ENCODE measurements at regions of chr22 and their contacts with region 1.

Region 1: DNA sequence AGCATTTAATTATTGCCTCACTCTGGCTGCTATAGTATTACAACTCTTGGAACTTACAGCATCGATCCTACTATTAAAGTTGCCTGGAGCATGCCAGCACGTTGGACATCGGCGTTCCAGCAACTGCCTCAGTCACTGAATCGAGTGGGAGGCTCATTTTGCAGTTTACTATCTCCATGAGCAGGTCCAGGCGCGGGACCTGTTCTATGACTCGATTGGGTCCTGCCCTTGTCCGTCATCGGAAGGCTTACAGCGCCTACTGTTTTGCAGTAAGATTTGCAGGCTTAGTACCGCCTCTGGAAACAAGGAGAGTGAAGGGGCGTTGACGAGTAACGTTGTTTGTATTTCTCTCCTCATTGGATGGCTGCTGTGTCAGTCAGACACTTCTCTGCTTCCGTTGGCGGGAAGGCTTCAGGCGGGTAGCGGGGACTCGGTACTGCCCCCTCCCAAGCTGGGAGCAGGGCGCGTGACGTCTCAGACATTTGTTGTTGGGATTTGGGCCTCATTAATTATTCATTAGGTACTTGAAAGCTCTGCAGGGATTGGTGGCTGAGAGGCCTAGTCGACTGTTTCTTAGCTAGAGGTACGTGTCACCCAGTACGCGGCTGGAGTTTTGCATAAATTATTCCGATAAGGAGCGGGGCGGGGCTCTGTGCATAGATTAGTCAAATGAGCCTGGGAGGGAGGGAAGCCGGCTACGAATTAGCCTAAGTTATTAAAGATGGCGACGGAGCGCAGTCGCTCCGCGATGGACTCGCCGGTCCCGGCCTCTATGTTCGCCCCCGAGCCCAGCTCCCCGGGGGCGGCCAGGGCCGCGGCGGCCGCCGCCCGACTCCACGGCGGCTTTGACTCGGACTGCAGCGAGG is at the start of gene GTPBP1:
- DNase-seq: peak; percentile 98
- ATAC-seq: peak; percentile 89
- H3K4me3 Mint-ChIP-seq: peak within 1 kb of the TSS; percentile 93
- H3K27ac Mint-ChIP-seq: peak within 1 kb of the TSS; percentile 97
- H3K4me1 Mint-ChIP-seq: peaks cover 53% of the 10 kb centered on the region
- H3K27me3 Mint-ChIP-seq: no peaks in the 10 kb centered on the region
- total RNA-seq, gene GTPBP1: 88.6 to 92.8 TPM

Region 2: GRCh38 chr22:38201710-38202436 is 503.6 kb before region 1 on chr22 and contains the start of gene MAFF:
- CTCF ChIA-PET with region 1: no interaction called
- POLR2A ChIA-PET with region 1: no interaction called
- intact Hi-C with region 1: loop called in 1 of 2 experiments (anchors 1 kb)
- DNase-seq: peak; percentile 97
- ATAC-seq: peak; percentile 72
- H3K4me3 Mint-ChIP-seq: peak within 1 kb of the TSS; percentile 82
- H3K27ac Mint-ChIP-seq: peak within 1 kb of the TSS; percentile 86
- H3K4me1 Mint-ChIP-seq: peaks cover 30% of the 10 kb centered on the region
- H3K27me3 Mint-ChIP-seq: no peaks in the 10 kb centered on the region
- total RNA-seq, gene MAFF: 8.3 to 9.4 TPM

Region 3: GRCh38 chr22:38291201-38291777 is 414.2 kb before region 1 on chr22:
- CTCF ChIA-PET with region 1: no interaction called
- POLR2A ChIA-PET with region 1: no interaction called
- intact Hi-C with region 1: no loop called
- DNase-seq: no peak
- ATAC-seq: no peak
- H3K4me3 Mint-ChIP-seq: no peak overlapping the region
- H3K27ac Mint-ChIP-seq: no peak overlapping the region
- H3K4me1 Mint-ChIP-seq: no peaks in the 10 kb centered on the region
- H3K27me3 Mint-ChIP-seq: no peaks in the 10 kb centered on the region

Region 4: DNA sequence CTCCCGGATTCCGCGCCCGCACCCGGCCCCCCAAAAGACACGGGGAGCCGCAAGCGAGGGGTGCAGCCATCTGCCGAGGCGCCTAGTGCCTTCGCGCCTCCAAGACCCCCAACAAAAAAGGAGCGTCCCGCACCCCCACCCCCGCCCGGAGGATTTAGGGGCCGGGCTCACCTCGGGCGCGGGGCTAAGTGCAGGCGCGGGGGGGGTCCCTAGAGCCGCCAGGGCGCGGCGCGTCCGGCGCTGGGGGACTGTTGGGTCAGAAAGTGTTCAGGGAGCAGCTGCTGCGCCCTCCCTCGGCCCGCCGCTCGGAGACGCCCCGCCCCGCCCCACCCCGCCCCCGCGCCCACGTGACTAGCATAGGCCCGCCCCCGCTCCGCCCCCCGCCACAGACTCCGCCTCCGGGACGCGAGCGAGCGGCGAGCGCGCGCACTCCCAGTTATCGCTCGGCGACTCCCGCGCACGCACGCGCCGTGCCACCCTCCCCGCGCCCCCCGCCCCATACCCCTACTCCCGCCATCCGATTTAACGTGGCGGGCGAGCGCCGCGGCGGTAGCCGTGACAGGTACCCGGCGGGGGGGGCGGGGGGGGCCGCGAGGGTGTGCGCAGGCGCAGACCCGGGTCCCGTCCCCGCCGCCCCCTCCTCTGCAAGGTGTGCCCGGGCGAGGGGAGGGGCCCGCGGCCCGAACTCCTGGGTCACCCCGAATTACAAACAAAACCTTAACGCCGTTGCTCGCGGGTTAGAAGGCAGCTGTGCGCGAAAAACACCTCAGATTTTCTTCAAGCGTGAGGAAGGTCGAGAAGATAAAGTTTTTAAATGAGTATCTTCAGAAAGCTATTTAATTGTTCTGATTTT is 306.6 kb before region 1 on chr22:
- CTCF ChIA-PET with region 1: no interaction called
- POLR2A ChIA-PET with region 1: no interaction called
- intact Hi-C with region 1: loop called in 1 of 2 experiments (anchors 1 kb)
- DNase-seq: peak; percentile 92
- ATAC-seq: peak; percentile 67
- H3K4me3 Mint-ChIP-seq: peak overlapping the region; percentile 72
- H3K27ac Mint-ChIP-seq: peak overlapping the region; percentile 47
- H3K4me1 Mint-ChIP-seq: peaks cover 38% of the 10 kb centered on the region
- H3K27me3 Mint-ChIP-seq: no peaks in the 10 kb centered on the region

Region 5: DNA sequence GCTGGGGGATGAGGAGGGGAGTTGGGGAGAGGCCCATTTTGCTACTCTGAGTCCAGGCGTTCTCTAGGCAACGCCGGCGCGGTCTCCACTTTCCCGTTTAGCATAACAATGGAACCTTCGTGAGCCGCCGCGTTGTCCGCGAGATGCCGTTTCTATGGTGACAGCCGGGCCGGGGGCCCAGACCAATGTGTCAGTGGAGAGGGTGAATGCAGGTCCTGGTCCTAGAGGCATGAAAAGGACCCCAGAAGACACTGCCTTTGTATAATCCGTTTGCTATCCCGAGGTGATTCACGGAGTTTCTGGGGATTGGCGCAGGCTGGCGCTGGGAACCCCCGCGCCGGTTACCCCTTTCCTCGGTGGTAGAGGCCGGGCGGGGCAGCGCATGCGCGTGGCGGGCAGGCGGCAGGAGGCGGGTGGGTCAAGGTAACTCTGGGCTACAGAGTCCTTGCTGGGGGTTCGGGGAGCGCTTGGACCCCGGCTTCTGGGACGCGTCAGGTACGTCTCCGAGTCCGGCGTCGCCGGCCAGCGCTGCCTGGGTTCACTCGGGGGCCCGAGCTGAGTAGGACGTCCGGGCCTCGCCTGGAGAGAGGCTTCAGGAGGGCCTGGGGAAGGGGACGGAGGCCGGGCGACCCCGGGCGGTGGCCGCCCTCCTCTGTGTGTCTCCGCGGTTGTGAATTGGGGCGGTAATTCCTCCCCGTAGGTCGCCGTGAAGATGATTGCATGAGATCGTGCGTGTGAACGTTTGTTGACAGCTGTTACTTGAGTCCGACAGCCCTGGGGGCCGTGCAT is 49.0 kb before region 1 on chr22 and contains the starts of genes CBY1 and FAM227A:
- CTCF ChIA-PET with region 1: no interaction called
- POLR2A ChIA-PET with region 1: no interaction called
- intact Hi-C with region 1: loop called (anchors 1 to 2 kb)
- DNase-seq: peak; percentile 89
- ATAC-seq: peak; percentile 83
- H3K4me3 Mint-ChIP-seq: peak within 1 kb of the TSS; percentile 79
- H3K27ac Mint-ChIP-seq: peak within 1 kb of the TSS; percentile 93
- H3K4me1 Mint-ChIP-seq: peaks cover 11% of the 10 kb centered on the region
- H3K27me3 Mint-ChIP-seq: no peaks in the 10 kb centered on the region
- total RNA-seq, gene CBY1: 9.8 to 11.6 TPM
- total RNA-seq, gene FAM227A: 0.30 to 0.63 TPM

Region 6: DNA sequence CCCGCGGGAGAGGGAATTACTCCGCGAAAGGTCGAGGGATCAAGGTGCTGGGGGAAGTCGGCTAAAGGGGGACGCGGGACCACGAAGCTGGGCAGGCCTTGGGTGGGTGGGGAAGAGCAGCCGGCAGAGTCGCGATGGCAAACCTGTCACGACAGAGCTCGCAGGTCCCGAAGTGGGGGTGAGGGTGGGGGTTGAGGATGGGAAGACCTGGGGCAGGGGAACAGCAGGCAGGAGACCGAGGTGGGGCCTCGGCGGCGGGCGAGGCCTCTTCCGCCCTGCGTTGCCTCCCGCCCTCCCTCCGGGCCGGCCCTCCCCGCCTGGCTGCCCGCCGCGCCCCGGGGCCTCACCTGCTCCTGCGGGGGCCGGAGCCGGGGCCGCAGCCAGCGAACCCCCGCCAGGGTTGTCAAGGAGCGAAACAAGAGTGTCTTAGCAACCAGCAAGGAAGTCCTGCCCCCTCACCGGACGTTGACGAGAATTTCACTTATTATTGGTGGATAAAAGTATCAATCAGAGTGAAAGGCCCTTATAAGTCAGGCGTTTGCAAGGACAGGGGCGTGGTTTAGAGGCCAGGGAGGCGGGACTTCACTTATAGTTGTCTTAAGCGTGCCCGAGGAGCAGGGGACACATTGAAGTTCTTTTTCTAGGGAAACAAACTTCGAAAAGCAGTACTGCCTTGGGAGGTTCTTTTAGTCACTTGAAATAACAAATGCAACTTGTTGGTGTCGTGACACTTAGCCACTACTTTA is 88.4 kb after region 1 on chr22 and contains the start of gene DNAL4:
- CTCF ChIA-PET with region 1: no interaction called
- POLR2A ChIA-PET with region 1: interaction called, 5 read pairs
- intact Hi-C with region 1: loop called in 1 of 2 experiments (anchors 1 kb)
- DNase-seq: peak; percentile 94
- ATAC-seq: peak; percentile 98
- H3K4me3 Mint-ChIP-seq: peak within 1 kb of the TSS; percentile 84
- H3K27ac Mint-ChIP-seq: peak within 1 kb of the TSS; percentile 67
- H3K4me1 Mint-ChIP-seq: peaks cover 26% of the 10 kb centered on the region
- H3K27me3 Mint-ChIP-seq: no peaks in the 10 kb centered on the region
- total RNA-seq, gene DNAL4: 7.4 to 8.0 TPM

Region 7: GRCh38 chr22:38881464-38881871 is 176.0 kb after region 1 on chr22:
- CTCF ChIA-PET with region 1: no interaction called
- POLR2A ChIA-PET with region 1: no interaction called
- intact Hi-C with region 1: no loop called
- DNase-seq: no peak
- ATAC-seq: no peak
- H3K4me3 Mint-ChIP-seq: no peak overlapping the region
- H3K27ac Mint-ChIP-seq: no peak overlapping the region
- H3K4me1 Mint-ChIP-seq: peaks cover 26% of the 10 kb centered on the region
- H3K27me3 Mint-ChIP-seq: no peaks in the 10 kb centered on the region

Region 8: GRCh38 chr22:38989466-38989865 is 284.0 kb after region 1 on chr22:
- CTCF ChIA-PET with region 1: no interaction called
- POLR2A ChIA-PET with region 1: no interaction called
- intact Hi-C with region 1: loop called in 1 of 2 experiments (anchors 5 kb)
- DNase-seq: peak; percentile 34
- ATAC-seq: no peak
- H3K4me3 Mint-ChIP-seq: no peak overlapping the region
- H3K27ac Mint-ChIP-seq: no peak overlapping the region
- H3K4me1 Mint-ChIP-seq: peaks cover 58% of the 10 kb centered on the region
- H3K27me3 Mint-ChIP-seq: peaks cover 3% of the 10 kb centered on the region

Region 9: GRCh38 chr22:39520054-39520891 is 814.8 kb after region 1 on chr22 and contains the start of gene ATF4:
- CTCF ChIA-PET with region 1: no interaction called
- POLR2A ChIA-PET with region 1: no interaction called
- intact Hi-C with region 1: loop called in 1 of 2 experiments (anchors 10 kb)
- DNase-seq: peak; percentile 98
- ATAC-seq: peak; percentile 90
- H3K4me3 Mint-ChIP-seq: peak within 1 kb of the TSS; percentile 86
- H3K27ac Mint-ChIP-seq: peak within 1 kb of the TSS; percentile 99
- H3K4me1 Mint-ChIP-seq: peaks cover 67% of the 10 kb centered on the region
- H3K27me3 Mint-ChIP-seq: no peaks in the 10 kb centered on the region
- total RNA-seq, gene ATF4: 580 to 680 TPM